ENCODE measurements at regions of chr2 and their contacts with region 1.

Region 1: GRCh38 chr2:1742681-1743395 is 1.5 kb downstream of the PXDN start:
- DNase-seq: peak; percentile 77 to 78
- ATAC-seq: peak; percentile 44 to 78 (median 68)
- H3K4me3 ChIP-seq: peak overlapping the region; percentile 23 to 87 (median 74)
- H3K27ac ChIP-seq: peak overlapping the region; percentile 81 to 97 (median 91)
- H3K4me1 ChIP-seq: peaks cover 0 to 65% (median 47%) of the 10 kb centered on the region in 9 donors
- H3K27me3 ChIP-seq: peaks cover 0 to 43% (median 11%) of the 10 kb centered on the region in 7 donors
- CTCF ChIP-seq: peak; percentile 23 to 73 (median 48)

Region 2: DNA sequence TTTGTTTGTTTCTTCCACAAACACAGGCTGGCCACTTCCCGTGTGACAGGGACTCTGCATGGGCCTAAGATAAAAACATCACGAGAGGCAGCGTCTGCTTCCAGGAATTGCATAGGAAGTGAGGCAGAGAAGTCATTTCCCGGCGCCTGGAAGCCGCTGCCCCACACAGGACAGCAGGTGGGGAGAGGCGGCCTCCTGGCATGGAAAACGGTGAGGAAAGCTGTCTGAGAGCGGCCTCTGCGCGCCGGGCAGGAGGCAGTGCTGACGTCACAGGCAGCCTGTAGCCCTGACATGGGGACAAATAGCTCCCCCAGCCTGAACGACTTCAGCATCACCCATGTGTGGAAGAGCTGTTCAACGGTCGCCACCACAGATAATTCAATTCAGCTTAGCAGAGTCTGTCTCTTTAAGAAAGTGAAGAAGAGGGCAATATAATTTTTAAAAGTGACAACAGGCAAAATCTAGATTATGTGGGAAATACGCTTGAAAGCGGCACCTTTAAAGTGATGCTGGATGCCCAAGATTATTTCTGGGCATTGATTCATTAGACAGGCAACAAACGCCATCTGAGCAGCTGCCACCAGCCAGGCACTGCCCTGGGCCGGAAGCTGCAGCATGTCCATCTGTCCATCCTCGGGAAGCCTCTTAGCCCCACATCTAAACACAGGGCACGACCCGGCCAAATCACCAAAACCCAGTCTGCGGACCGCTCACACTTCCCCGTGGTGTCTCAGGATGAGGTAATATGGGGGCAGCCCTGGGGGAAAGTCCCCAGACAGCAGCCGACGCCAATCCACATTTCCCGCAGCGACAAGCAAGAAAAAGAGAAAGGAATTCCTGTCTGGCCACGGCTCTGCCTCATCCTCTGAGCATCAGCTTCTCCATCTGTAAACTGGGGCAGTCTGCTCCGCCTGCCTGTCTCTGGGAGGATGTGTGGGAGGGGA is 137.5 kb before region 1 on chr2:
- intact Hi-C with region 1: loop called in 1 of 10 experiments (anchors 5 kb)
- DNase-seq: peak; percentile 60 to 76
- ATAC-seq: peak; percentile 32 to 85 (median 78)
- H3K4me3 ChIP-seq: peak overlapping the region in 2 of 10 donors; percentile 18 to 21
- H3K27ac ChIP-seq: peak overlapping the region; percentile 4 to 84 (median 63)
- H3K4me1 ChIP-seq: peaks cover 14 to 56% (median 35%) of the 10 kb centered on the region in 9 donors
- H3K27me3 ChIP-seq: peaks cover 0 to 7% (median 0%) of the 10 kb centered on the region in 7 donors
- CTCF ChIP-seq: no peak

Region 3: DNA sequence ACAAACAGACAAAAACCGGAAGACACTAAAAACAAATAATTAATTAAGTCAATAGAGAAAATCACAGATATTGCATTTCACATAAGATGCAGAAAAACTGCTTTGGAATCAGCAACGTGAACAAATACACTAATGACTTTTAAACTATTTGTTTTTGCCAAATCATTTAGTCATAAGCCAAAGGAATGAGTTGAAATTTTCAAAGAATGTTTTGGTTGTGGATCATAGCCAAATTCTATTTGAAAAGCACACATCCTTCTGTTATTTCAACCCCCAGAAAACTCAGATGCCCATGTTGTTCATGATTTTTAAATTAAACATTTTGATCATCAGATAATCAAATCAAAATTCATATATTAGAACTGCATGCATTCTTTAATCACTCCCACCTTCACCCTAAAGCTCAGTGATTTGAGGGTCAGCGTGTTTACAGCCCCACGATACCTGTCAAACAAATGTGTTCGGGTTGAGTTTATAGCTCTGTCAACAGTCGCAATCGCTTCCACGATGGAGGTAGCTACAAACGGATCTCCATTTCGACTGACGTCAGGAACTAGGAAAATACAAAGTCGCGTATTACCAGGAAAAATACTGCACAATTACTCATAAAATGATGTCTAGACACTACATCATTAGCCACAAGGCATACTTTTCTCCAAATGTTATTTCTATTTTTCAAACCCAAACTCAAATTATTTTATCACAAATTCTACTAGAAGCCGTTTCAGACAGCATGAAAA is 88.7 kb before region 1 on chr2:
- intact Hi-C with region 1: loop called in 6 of 10 experiments (anchors 1 to 10 kb)
- DNase-seq: no peak
- ATAC-seq: peak in 3 of 8 donors; percentile 8 to 41 (median 15)
- H3K4me3 ChIP-seq: no peak overlapping the region
- H3K27ac ChIP-seq: peak overlapping the region in 9 of 10 donors; percentile 40 to 88 (median 72)
- H3K4me1 ChIP-seq: peaks cover 8 to 50% (median 26%) of the 10 kb centered on the region in 9 donors
- H3K27me3 ChIP-seq: peaks cover 0 to 10% (median 0%) of the 10 kb centered on the region in 7 donors
- CTCF ChIP-seq: no peak

Region 4: GRCh38 chr2:1707771-1708418 is 34.9 kb before region 1 on chr2:
- intact Hi-C with region 1: loop called in 2 of 10 experiments (anchors 5 kb)
- DNase-seq: peak; percentile 79 to 86
- ATAC-seq: peak; percentile 87 to 92 (median 90)
- H3K4me3 ChIP-seq: peak overlapping the region in 4 of 10 donors; percentile 19 to 24 (median 22)
- H3K27ac ChIP-seq: peak overlapping the region; percentile 34 to 86 (median 76)
- H3K4me1 ChIP-seq: peaks cover 11 to 58% (median 43%) of the 10 kb centered on the region in 9 donors
- H3K27me3 ChIP-seq: peaks cover 0 to 3% (median 0%) of the 10 kb centered on the region in 7 donors
- CTCF ChIP-seq: no peak

Measured in heart right ventricle (tissue), 16 donors.